Right ventricle myocardium superior (tissue), 1 donor: ENCODE measurements at regions of chr1 and their contacts with region 1.

Region 1: DNA sequence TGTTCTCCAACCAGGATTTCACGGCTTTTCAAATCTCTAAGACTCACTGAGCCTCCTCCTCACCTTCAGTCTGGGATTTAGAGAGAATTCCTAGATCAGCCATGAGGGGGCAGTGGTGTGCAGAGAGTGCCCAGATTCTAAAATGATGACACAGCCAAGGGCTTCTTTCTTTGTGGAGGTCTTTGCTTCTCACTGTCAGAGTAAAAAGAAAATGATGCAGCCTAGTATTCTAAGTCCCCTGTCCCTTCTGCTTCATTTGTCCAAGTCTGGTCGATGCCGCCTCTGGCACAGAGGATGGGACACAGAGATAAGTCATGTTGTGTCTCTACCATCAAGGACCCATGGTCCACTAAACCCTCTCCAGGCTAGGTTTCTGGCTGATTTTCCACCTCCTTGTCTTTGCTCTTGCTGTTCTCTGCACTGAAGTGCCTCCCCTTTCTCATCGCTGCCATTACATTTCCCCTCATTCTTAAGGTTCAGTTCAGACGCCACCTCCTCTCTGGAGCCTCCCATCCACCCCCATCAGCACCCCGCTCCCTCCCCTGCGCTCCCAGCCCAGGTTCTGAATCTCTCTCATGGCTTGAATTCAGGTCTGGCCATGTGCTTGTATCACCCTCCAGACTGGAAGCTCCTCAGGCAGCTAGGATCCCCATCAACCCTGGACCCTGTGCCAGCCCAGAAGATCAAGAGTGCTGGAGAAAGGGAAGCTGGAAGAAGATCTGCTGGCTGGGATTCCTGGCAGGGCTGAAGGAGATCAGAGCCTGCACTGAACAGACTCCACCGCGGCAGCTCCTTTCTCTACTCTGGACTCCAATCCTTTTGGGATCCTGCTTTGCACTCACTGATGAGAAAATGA is 12.0 kb upstream of the TINAGL1 start:
- DNase-seq: no peak
- ATAC-seq: peak; percentile 65

Region 2: GRCh38 chr1:31593770-31594632 is 29.6 kb after region 1 on chr1:
- intact Hi-C with region 1: loop called (anchors 2 kb)
- DNase-seq: peak; percentile 77
- ATAC-seq: peak; percentile 82

Region 3: DNA sequence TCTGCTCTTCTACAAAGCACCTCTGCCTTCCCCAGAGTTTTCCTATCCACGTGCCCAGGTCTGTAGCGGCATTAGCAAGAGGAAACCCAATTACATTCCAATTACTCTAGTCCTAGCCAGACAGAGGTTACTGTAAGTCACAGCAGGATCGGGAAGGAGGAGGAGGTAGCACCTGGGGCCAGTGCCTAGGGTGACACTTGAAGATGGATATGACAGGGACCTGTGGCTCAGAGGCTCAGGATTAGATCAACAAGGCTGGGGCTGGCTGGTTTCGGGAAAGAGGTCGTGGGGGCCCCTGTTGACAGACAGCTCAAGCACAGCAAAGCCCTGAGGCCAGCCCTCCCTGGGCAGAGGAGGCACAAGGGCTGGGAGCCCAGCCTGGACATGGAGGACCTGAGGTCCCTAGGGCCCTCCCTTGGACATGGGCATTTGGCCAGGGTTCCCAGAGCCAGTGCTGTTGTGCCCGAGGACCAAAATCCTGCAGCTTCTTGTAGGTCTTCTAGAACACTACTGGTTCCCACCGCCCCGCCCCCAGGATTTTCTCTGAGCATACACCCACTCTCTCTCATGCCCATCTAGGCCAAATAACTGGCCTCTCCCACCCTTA is 50.2 kb after region 1 on chr1:
- intact Hi-C with region 1: loop called (anchors 5 kb)
- DNase-seq: no peak
- ATAC-seq: no peak

Region 4: DNA sequence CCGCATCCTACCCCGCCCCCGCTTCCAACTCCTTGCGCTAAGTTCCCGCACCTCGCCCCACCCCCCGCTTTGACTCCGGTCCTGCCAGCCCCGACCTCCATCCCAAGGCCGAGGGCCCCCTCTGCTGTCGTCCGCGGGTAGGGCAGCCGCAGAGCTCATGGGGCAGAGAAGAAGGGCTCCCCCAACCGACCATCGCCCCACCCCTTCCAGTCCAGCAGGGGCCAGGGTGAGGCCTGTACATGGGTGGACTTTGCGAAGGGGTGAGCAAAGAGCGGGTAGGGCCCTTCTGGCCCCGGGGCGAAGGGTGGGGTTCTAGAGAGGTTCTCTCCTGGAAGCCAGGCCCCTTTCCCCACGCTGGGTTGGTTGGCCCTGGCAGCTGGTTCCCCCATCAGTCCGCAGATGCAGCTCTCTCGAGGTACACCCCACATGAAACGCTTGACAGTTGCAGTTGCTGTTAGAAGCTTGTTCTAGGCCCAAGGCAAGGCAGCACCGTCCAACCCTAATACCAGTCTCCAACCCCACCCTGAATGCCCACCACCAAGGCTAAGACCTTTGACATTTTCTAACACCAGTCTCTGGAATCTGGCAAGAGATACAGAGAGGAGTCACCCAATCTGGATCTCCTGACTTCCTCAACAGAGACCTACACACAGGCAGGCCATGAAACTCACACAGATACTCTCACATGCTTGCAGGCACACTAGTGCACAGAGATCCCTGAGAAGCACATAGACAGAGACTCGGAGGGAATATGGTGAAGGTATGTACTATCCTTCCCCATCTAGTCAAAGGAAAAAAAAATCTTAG is 225.1 kb after region 1 on chr1:
- intact Hi-C with region 1: loop called (anchors 10 kb)
- DNase-seq: peak; percentile 98
- ATAC-seq: peak; percentile 95